ENCODE measurements at regions of chr9 and their contacts with region 1.

Region 1: GRCh38 chr9:33167046-33167808 is at the start of gene B4GALT1:
- DNase-seq: peak; percentile 97
- H3K4me3 ChIP-seq: peak within 1 kb of the TSS; percentile 38 to 84 (median 72)
- H3K27ac ChIP-seq: peak within 1 kb of the TSS; percentile 93 to 97 (median 96)
- H3K4me1 ChIP-seq: peaks cover 22 to 49% (median 43%) of the 10 kb centered on the region in 4 donors
- H3K27me3 ChIP-seq: no peaks in the 10 kb centered on the region
- CTCF ChIP-seq: peak in 2 of 5 experiments; percentile 22 to 27
- EP300 ChIP-seq: no peak
- POLR2A ChIP-seq: peak; percentile 88
- total RNA-seq, gene B4GALT1: 23.7 to 126 (median 93.7) TPM

Region 2: GRCh38 chr9:32839013-32839885 is 328.0 kb before region 1 on chr9:
- in situ Hi-C with region 1: no loop called
- intact Hi-C with region 1: no loop called
- DNase-seq: peak; percentile 8
- H3K4me3 ChIP-seq: no peak overlapping the region
- H3K27ac ChIP-seq: no peak overlapping the region
- H3K4me1 ChIP-seq: peaks cover 0 to 3% (median 0%) of the 10 kb centered on the region in 4 donors
- H3K27me3 ChIP-seq: no peaks in the 10 kb centered on the region
- CTCF ChIP-seq: no peak
- EP300 ChIP-seq: no peak
- POLR2A ChIP-seq: no peak

Region 3: DNA sequence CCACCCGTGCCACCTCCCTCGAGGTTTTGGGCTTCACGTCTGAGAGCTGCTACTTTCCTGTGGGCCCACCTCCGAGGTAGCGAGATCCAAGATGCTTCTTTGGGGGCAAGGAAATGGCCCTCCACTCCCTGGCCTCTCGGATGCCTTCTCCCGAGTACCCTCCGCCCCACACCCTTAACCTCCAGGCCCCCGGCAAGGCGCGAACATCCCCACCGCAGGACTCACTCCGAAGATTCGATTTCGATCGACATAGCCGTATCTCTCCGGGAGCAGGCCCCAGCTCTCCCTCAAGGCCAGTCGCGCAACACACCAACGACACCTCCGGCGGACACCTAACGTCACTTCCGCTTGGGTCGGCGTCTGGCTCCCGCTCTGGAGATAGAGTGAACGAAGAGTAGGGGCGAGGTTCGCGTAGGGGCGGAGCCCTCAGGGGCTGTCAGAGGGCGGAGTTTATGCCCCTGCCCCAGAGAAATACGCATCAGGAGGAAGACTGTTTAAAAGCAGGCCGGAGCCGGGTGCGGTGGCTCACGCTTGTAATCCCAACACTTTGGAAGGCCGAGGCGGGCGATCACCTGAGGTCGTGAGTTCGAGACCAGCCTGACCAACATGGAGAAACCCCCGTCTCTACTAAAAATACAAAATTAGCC is 90.7 kb before region 1 on chr9 and contains the start of gene SMU1:
- in situ Hi-C with region 1: loop called in 2 of 4 experiments (anchors 5 kb)
- intact Hi-C with region 1: loop called (anchors 5 kb)
- DNase-seq: peak; percentile 97
- H3K4me3 ChIP-seq: peak within 1 kb of the TSS; percentile 65 to 90 (median 80)
- H3K27ac ChIP-seq: peak within 1 kb of the TSS; percentile 88 to 97 (median 94)
- H3K4me1 ChIP-seq: peaks cover 0 to 26% (median 13%) of the 10 kb centered on the region in 4 donors
- H3K27me3 ChIP-seq: no peaks in the 10 kb centered on the region
- CTCF ChIP-seq: no peak
- EP300 ChIP-seq: no peak
- POLR2A ChIP-seq: peak; percentile 91
- total RNA-seq, gene SMU1: 7.2 to 14.6 (median 10.4) TPM